Naive thymus-derived CD4-positive, alpha-beta T cell (primary cell): ENCODE measurements at regions of chr2 and their contacts with region 1.

Region 1: GRCh38 chr2:213251618-213252017 is 32.6 kb upstream of the SPAG16 start:
- DNase-seq: peak in 7 of 9 donors; percentile 9 to 54 (median 50)
- ATAC-seq: peak; percentile 79
- H3K4me3 ChIP-seq: no peak overlapping the region
- H3K4me3 Mint-ChIP-seq: no peak overlapping the region
- H3K27ac ChIP-seq: no peak overlapping the region
- H3K27ac Mint-ChIP-seq: no peak overlapping the region
- H3K4me1 ChIP-seq: no peaks in the 10 kb centered on the region
- H3K4me1 Mint-ChIP-seq: no peaks in the 10 kb centered on the region
- H3K27me3 ChIP-seq: no peaks in the 10 kb centered on the region
- H3K27me3 Mint-ChIP-seq: peaks cover 4 to 8% (median 6%) of the 10 kb centered on the region in 5 donors

Region 2: DNA sequence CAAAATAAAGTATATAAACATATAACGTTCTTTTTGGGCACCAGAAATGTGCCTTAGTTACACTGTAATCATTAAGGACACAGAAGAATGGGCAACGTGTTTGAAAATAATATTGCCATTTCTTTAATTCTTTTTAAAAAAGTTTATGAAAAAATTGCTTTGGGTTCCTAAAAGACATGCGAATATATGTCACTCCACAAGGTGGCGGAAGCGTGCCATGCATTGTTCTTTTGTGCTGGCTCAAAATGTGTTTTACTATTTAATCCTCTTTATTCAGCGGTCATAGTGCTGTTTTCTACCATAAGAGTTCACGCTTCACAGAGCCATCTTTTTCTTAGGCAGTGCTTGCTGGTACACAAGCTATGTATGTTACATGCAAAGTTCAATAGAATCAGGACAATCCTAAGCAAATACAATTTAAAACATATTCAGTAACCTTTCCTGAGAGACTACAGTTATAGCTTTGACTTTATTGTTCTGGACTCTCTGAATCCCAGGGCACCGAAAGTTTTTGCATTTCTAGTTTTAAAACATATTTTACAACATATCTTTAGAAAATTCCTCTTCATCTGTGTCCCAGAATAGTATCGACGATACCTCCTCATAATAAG is 565.2 kb before region 1 on chr2:
- CTCF ChIA-PET with region 1: no interaction called
- POLR2A ChIA-PET with region 1: no interaction called
- intact Hi-C with region 1: loop called in 1 of 2 experiments (anchors 2 kb)
- DNase-seq: peak in 7 of 9 donors; percentile 0 to 50 (median 34)
- ATAC-seq: peak; percentile 48
- H3K4me3 ChIP-seq: no peak overlapping the region
- H3K4me3 Mint-ChIP-seq: peak overlapping the region in 1 of 10 donors; percentile 7
- H3K27ac ChIP-seq: no peak overlapping the region
- H3K27ac Mint-ChIP-seq: no peak overlapping the region
- H3K4me1 ChIP-seq: no peaks in the 10 kb centered on the region
- H3K4me1 Mint-ChIP-seq: peaks cover 0 to 2% (median 0%) of the 10 kb centered on the region in 7 donors
- H3K27me3 ChIP-seq: no peaks in the 10 kb centered on the region
- H3K27me3 Mint-ChIP-seq: peaks cover 0 to 6% (median 0%) of the 10 kb centered on the region in 5 donors

Region 3: DNA sequence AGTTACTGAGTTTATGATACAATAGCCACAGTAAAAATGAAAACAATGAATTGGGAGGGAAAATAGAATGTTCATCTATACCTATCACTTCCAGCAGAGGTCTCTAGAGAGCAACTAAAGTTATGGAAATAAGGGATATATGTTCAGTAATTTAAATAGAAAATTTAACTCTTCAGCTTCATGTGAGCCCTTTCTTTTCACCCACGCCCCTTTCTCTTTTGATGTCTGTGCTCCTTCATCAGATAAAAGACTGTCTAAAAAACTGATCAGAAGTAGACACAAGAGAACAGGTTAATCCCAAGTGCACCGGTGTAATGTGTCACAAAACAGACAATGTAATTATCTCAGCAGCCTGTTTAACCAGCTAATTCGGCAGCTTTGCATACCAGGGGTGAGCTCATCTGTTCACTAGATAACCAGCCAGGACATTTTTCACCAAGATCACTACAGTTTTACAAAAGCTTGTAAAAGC is 474.6 kb before region 1 on chr2:
- CTCF ChIA-PET with region 1: no interaction called
- POLR2A ChIA-PET with region 1: no interaction called
- intact Hi-C with region 1: loop called in 1 of 2 experiments (anchors 1 kb)
- DNase-seq: peak in 6 of 9 donors; percentile 6 to 46 (median 18)
- ATAC-seq: peak; percentile 54
- H3K4me3 ChIP-seq: no peak overlapping the region
- H3K4me3 Mint-ChIP-seq: peak overlapping the region in 1 of 10 donors; percentile 37
- H3K27ac ChIP-seq: no peak overlapping the region
- H3K27ac Mint-ChIP-seq: no peak overlapping the region
- H3K4me1 ChIP-seq: no peaks in the 10 kb centered on the region
- H3K4me1 Mint-ChIP-seq: peaks cover 0 to 5% (median 0%) of the 10 kb centered on the region in 7 donors
- H3K27me3 ChIP-seq: no peaks in the 10 kb centered on the region
- H3K27me3 Mint-ChIP-seq: no peaks in the 10 kb centered on the region

Region 4: DNA sequence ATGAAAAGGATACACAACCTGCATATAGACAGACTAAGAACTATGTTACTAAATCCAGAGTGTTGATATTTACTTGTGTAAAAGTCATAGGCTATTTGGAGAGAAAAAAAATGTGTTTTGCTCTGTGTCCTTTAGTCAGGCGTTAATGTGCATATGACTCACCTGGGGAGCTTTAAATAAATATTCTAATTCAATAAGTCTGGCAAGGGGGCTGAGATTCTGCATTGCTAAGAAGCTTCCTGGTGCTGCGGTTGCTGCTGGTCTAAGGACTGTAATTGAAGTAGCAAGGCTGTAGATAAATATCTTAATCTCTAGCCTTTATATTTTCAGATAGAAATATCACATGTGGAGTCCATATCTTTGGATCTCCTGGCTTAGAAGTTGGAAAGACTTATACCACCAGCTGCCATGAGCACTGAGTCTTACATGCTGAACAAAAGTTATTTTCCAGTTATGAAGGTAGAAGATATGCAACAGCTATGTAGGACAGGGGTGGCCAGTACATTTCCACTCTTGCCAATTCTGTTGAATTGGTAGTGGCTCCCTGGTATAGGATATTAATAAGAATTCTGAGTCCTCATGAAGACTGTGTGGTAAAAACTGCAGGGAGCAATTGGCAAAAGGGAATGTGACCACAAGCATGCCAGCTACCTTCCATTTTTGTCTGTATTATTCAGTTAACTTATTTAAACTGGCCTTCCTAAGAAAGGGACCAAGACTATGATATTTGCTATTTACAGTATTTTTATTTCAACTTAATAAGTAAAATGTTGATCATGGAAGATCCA is 37.5 kb after region 1 on chr2:
- CTCF ChIA-PET with region 1: no interaction called
- POLR2A ChIA-PET with region 1: no interaction called
- intact Hi-C with region 1: no loop called
- DNase-seq: no peak
- ATAC-seq: no peak
- H3K4me3 ChIP-seq: no peak overlapping the region
- H3K4me3 Mint-ChIP-seq: no peak overlapping the region
- H3K27ac ChIP-seq: no peak overlapping the region
- H3K27ac Mint-ChIP-seq: no peak overlapping the region
- H3K4me1 ChIP-seq: peaks cover 6 to 9% of the 10 kb centered on the region in 2 donors
- H3K4me1 Mint-ChIP-seq: peaks cover 9 to 48% (median 28%) of the 10 kb centered on the region in 7 donors
- H3K27me3 ChIP-seq: no peaks in the 10 kb centered on the region
- H3K27me3 Mint-ChIP-seq: no peaks in the 10 kb centered on the region

Region 5: DNA sequence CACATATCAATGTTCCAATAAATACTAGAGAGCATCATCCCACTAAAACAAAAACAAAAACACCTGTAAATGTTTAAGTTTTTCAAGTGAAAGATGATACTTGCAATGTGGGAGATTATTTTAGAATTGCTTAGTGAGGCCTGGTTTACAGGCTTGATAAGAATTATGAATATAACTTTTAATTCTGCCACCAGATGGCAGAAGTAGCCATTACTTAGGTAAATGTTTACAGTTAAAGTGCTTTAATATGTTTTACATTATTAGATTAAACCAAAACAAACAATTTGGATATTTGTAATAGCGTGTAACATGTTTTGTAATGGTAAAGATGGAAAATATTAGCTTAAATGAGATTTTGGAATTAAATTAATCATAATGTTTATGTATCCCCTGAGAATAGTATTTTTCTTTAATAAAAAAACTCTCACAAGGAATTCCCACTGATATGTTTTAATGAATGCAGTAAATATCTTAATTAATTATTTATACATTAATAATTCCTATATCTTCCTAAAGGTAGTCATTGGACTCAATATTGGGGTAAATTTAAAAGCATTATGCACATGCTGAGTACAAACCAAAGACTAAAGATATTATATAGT is 554.6 kb after region 1 on chr2:
- CTCF ChIA-PET with region 1: no interaction called
- POLR2A ChIA-PET with region 1: no interaction called
- intact Hi-C with region 1: loop called (anchors 2 to 5 kb)
- DNase-seq: no peak
- ATAC-seq: no peak
- H3K4me3 ChIP-seq: no peak overlapping the region
- H3K4me3 Mint-ChIP-seq: no peak overlapping the region
- H3K27ac ChIP-seq: no peak overlapping the region
- H3K27ac Mint-ChIP-seq: no peak overlapping the region
- H3K4me1 ChIP-seq: no peaks in the 10 kb centered on the region
- H3K4me1 Mint-ChIP-seq: no peaks in the 10 kb centered on the region
- H3K27me3 ChIP-seq: no peaks in the 10 kb centered on the region
- H3K27me3 Mint-ChIP-seq: peaks cover 0 to 7% (median 0%) of the 10 kb centered on the region in 5 donors

Region 6: DNA sequence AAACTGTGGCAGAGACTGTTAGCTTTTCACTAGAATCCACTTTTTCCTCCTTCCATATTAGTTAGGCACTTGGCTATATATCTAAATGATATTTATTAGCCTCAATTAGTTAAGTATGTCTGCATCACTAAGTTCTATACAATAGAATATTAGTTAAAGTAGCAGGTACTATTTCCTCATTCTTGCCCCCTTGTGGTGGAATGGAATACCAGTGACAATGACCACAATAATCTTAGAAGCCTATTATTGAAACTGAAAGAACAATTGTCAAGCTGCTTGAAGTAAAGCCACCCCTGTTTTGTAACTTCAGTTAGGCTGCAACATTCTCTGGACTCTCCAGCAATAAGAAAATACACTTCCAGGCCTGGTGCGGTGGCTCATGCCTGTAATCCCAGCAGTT is 682.9 kb after region 1 on chr2:
- CTCF ChIA-PET with region 1: no interaction called
- POLR2A ChIA-PET with region 1: no interaction called
- intact Hi-C with region 1: loop called in 1 of 2 experiments (anchors 1 kb)
- DNase-seq: peak in 4 of 9 donors; percentile 5 to 23 (median 11)
- ATAC-seq: no peak
- H3K4me3 ChIP-seq: no peak overlapping the region
- H3K4me3 Mint-ChIP-seq: no peak overlapping the region
- H3K27ac ChIP-seq: no peak overlapping the region
- H3K27ac Mint-ChIP-seq: no peak overlapping the region
- H3K4me1 ChIP-seq: no peaks in the 10 kb centered on the region
- H3K4me1 Mint-ChIP-seq: no peaks in the 10 kb centered on the region
- H3K27me3 ChIP-seq: no peaks in the 10 kb centered on the region
- H3K27me3 Mint-ChIP-seq: peaks cover 0 to 4% (median 0%) of the 10 kb centered on the region in 5 donors

Region 7: DNA sequence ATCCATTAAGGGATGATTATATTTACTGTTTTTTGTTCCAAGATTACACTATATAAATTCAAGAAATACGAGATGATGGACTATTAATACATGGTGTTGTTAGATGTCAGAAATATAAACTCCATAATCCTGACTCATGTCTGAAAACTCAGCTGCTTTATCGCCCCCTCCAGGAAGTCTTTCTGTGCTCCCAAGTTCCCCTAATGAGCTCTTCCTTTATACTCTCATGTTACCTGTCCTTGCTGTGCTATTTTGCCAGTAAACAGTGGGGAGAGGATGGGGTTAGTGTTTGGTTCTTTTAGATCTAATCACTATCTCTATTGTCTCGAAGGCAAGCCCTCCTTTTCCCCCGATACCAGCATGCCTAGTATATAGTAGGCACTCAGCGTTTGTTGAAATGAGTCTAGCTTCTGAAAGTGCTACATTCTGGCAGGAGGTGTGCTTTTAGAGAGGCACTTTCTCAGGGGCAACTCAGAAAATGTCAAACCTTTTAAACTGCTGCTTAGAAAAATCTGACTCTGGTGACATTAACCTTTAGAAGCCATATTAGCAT is 1579.3 kb after region 1 on chr2:
- CTCF ChIA-PET with region 1: interaction called, 3 read pairs
- POLR2A ChIA-PET with region 1: no interaction called
- intact Hi-C with region 1: loop called in 1 of 2 experiments (anchors 2 kb)
- DNase-seq: peak in 2 of 9 donors; percentile 6 to 22
- ATAC-seq: no peak
- H3K4me3 ChIP-seq: no peak overlapping the region
- H3K4me3 Mint-ChIP-seq: no peak overlapping the region
- H3K27ac ChIP-seq: no peak overlapping the region
- H3K27ac Mint-ChIP-seq: no peak overlapping the region
- H3K4me1 ChIP-seq: no peaks in the 10 kb centered on the region
- H3K4me1 Mint-ChIP-seq: no peaks in the 10 kb centered on the region
- H3K27me3 ChIP-seq: no peaks in the 10 kb centered on the region
- H3K27me3 Mint-ChIP-seq: peaks cover 0 to 12% (median 5%) of the 10 kb centered on the region in 5 donors